Activated CD8-positive, alpha-beta memory T cell treated with anti-CD3 and anti-CD28 coated beads, Interleukin-2, amount 10 ng/mL, durations not matched to agents 7 days and 5 days (primary cell): ENCODE measurements at regions of chr19 and their contacts with region 1.

Region 1: DNA sequence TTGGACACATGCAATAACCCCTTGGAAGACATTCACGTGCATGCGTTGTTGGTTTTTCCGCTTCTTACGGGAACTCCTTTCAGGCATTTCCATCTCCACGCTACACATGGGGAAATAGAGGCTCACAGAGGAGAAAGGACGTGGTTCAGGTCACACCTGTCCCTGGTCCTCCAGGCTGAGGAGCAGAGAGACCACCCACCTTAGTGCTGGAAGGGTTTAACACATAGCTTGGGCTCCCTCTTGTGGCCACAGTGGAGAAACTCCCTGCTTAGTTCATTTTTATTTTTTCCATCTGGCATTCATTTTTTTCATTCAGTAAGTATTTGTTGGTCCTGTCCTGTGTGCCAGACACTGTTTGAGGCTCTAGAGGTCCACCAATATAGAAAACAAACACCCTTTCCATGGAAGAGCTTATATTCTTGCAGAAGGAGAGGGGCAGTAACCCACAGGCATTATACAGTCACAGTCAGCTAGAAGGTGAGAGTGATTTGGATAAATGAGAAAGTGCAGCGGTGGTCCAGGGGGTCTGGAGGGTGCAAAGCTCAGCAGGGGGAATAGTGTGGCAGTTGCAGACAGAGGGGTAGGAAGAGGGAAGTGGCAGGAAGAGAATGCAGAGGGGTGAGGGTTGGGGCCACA is 24.2 kb upstream of the TTYH1 start:
- DNase-seq: peak; percentile 74
- ATAC-seq: no peak
- H3K4me3 Mint-ChIP-seq: no peak overlapping the region
- H3K27ac Mint-ChIP-seq: no peak overlapping the region
- H3K4me1 Mint-ChIP-seq: peaks cover 36% of the 10 kb centered on the region
- H3K27me3 Mint-ChIP-seq: peaks cover 15% of the 10 kb centered on the region

Region 2: GRCh38 chr19:54319892-54320670 is 71.0 kb before region 1 on chr19:
- CTCF ChIA-PET with region 1: interaction called, 135 read pairs
- DNase-seq: no peak
- ATAC-seq: no peak
- H3K4me3 Mint-ChIP-seq: no peak overlapping the region
- H3K27ac Mint-ChIP-seq: no peak overlapping the region
- H3K4me1 Mint-ChIP-seq: peaks cover 5% of the 10 kb centered on the region
- H3K27me3 Mint-ChIP-seq: peaks cover 24% of the 10 kb centered on the region

Region 3: GRCh38 chr19:54352041-54352440 is 39.0 kb before region 1 on chr19:
- CTCF ChIA-PET with region 1: interaction called, 57 read pairs
- DNase-seq: no peak
- ATAC-seq: no peak
- H3K4me3 Mint-ChIP-seq: no peak overlapping the region
- H3K27ac Mint-ChIP-seq: no peak overlapping the region
- H3K4me1 Mint-ChIP-seq: peaks cover 3% of the 10 kb centered on the region
- H3K27me3 Mint-ChIP-seq: peaks cover 20% of the 10 kb centered on the region

Region 4: DNA sequence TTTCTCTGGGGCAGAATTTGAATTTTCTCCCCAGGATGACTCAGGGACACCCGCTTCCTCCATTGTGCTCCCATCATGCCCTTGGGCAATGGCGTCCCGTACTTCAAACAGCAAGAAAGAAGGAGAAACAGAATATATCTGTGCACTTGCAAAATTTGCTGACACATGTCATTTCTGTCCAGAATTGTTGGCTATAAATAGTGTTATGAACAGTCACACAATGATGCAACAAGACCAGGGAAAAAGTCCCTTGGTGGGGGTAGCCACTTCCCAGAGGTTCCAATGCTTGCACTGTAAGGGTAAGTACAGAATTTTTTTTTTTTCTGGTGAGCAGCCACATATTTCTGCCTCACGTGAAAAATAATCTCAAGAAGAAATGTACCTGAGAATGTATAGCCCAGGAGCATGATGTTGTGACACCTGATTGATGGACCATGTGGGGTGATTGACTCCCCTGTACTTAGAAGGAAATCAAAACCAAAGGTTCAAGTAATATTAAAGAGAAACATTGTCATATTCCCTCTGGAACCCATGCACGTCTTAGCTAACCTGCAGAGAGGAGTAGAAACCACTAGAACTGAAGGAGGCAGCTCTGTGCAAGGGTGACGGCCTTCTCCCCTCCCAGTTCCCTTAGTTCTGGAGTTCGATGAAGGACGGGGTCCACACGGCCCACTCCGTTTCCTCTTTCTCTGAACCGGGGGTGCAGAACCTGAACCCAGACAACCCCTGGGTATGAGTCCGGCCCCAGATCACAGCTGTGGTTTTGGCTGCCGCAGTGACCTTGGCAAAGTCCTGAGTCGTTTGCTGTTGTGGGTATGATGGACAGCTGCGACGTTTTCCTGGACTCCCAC is 17.1 kb before region 1 on chr19:
- CTCF ChIA-PET with region 1: interaction called, 40 read pairs
- DNase-seq: no peak
- ATAC-seq: no peak
- H3K4me3 Mint-ChIP-seq: no peak overlapping the region
- H3K27ac Mint-ChIP-seq: peak overlapping the region; percentile 15
- H3K4me1 Mint-ChIP-seq: peaks cover 81% of the 10 kb centered on the region
- H3K27me3 Mint-ChIP-seq: peaks cover 47% of the 10 kb centered on the region

Region 5: DNA sequence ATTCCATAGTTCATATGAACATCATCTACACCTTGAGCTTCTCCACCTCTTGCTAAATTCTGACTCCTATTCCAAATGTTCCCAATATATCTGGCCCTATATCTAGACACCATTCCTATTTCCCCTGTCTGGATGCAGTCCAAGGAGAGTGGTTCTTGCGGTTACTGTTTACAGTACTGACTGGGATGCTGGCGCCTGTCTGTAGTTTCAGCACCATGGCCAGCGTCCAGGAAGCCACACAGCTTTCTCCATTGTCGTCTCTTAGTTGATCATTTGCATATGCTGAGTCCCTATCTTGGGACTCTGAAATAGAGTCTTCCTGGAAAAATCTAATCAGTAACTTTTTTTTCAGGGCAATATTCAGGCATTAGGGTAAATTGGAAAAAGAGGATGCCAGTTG is 126.4 kb after region 1 on chr19:
- CTCF ChIA-PET with region 1: no interaction called
- DNase-seq: peak; percentile 79
- ATAC-seq: peak; percentile 43
- H3K4me3 Mint-ChIP-seq: no peak overlapping the region
- H3K27ac Mint-ChIP-seq: no peak overlapping the region
- H3K4me1 Mint-ChIP-seq: peaks cover 41% of the 10 kb centered on the region
- H3K27me3 Mint-ChIP-seq: peaks cover 22% of the 10 kb centered on the region